Naive thymus-derived CD4-positive, alpha-beta T cell (primary cell): ENCODE measurements at regions of chrX and their contacts with region 1.

Region 1: GRCh38 chrX:152663086-152663485 is 25.4 kb downstream of the GABRQ start:
- DNase-seq: no peak
- ATAC-seq: no peak
- H3K4me3 ChIP-seq: no peak overlapping the region
- H3K4me3 Mint-ChIP-seq: no peak overlapping the region
- H3K27ac ChIP-seq: no peak overlapping the region
- H3K27ac Mint-ChIP-seq: no peak overlapping the region
- H3K4me1 ChIP-seq: no peaks in the 10 kb centered on the region
- H3K4me1 Mint-ChIP-seq: no peaks in the 10 kb centered on the region
- H3K27me3 ChIP-seq: no peaks in the 10 kb centered on the region
- H3K27me3 Mint-ChIP-seq: peaks cover 0 to 19% (median 7%) of the 10 kb centered on the region in 5 donors

Region 2: DNA sequence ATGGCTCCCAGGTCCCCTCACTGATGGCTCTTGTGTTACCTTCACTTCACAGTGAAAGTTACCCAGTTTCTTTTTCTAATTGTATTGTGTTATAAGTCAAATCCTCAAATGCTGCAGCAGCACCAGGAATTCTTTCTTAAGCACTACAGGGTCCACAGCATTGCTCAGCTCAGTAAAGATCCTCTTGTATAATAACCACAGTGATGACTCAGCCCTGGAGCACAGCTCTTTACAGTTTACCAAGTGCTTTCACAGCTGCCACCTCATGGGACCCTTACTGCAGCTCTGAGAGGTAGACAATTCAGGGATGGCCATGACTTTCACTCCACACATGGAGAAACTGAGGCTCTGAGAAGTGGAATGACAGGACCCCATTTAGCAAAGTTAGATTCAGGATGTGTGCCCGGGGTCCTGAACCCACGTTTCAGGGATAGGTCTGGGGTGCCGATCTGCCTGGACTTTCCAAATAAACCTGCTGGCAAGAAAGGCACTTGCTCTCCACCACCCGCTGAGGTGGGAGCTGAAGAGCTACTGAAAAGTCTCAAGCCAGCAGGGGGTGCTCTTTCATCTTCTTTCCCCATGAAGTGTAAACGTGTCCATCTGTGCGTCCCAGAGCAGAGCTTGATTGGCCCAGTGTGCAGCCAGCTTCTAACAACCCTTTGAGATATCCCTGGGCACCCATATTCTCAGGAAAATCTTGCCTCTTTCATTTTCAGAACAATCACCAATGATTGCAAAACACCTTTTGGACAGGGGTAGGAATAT is 61.1 kb before region 1 on chrX:
- CTCF ChIA-PET with region 1: no interaction called
- POLR2A ChIA-PET with region 1: no interaction called
- intact Hi-C with region 1: loop called in 1 of 2 experiments (anchors 10 kb)
- DNase-seq: no peak
- ATAC-seq: no peak
- H3K4me3 ChIP-seq: no peak overlapping the region
- H3K4me3 Mint-ChIP-seq: no peak overlapping the region
- H3K27ac ChIP-seq: no peak overlapping the region
- H3K27ac Mint-ChIP-seq: no peak overlapping the region
- H3K4me1 ChIP-seq: no peaks in the 10 kb centered on the region
- H3K4me1 Mint-ChIP-seq: no peaks in the 10 kb centered on the region
- H3K27me3 ChIP-seq: no peaks in the 10 kb centered on the region
- H3K27me3 Mint-ChIP-seq: peaks cover 0 to 9% (median 5%) of the 10 kb centered on the region in 5 donors

Region 3: DNA sequence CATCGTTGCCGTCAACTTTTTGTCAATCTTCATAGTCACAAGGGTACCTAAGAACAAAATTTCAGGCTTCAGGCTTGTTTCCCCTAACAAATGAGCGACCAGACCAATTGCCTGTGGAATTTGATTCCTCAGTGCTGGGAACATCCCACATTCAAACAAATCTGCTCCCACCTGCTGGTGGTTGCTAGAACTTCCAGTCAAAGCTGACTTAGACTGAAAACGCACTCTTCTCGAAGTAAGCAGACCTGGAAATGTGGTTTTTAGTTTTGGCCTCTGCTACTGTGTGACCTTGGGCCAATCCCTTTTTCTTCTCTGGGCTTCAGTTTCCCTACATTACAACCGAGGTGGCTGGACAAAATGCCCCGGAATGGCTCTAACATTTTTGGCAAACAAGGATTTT is 27.1 kb before region 1 on chrX:
- CTCF ChIA-PET with region 1: no interaction called
- POLR2A ChIA-PET with region 1: no interaction called
- intact Hi-C with region 1: no loop called
- DNase-seq: no peak
- ATAC-seq: no peak
- H3K4me3 ChIP-seq: no peak overlapping the region
- H3K4me3 Mint-ChIP-seq: no peak overlapping the region
- H3K27ac ChIP-seq: no peak overlapping the region
- H3K27ac Mint-ChIP-seq: no peak overlapping the region
- H3K4me1 ChIP-seq: no peaks in the 10 kb centered on the region
- H3K4me1 Mint-ChIP-seq: peaks cover 0 to 3% (median 0%) of the 10 kb centered on the region in 7 donors
- H3K27me3 ChIP-seq: no peaks in the 10 kb centered on the region
- H3K27me3 Mint-ChIP-seq: peaks cover 14 to 32% (median 20%) of the 10 kb centered on the region in 5 donors

Region 4: GRCh38 chrX:153102436-153102835 is 439.4 kb after region 1 on chrX:
- CTCF ChIA-PET with region 1: no interaction called
- POLR2A ChIA-PET with region 1: no interaction called
- intact Hi-C with region 1: no loop called
- DNase-seq: no peak
- ATAC-seq: no peak
- H3K4me3 ChIP-seq: no peak overlapping the region
- H3K4me3 Mint-ChIP-seq: no peak overlapping the region
- H3K27ac ChIP-seq: no peak overlapping the region
- H3K27ac Mint-ChIP-seq: no peak overlapping the region
- H3K4me1 ChIP-seq: no peaks in the 10 kb centered on the region
- H3K4me1 Mint-ChIP-seq: peaks cover 3 to 14% (median 7%) of the 10 kb centered on the region in 7 donors
- H3K27me3 ChIP-seq: no peaks in the 10 kb centered on the region
- H3K27me3 Mint-ChIP-seq: no peaks in the 10 kb centered on the region